ENCODE measurements at regions of chr6 and their contacts with region 1.

Region 1: GRCh38 chr6:122869437-122870024 is 80.5 kb downstream of the SMPDL3A start:
- DNase-seq: peak; percentile 25 to 38 (median 29)
- ATAC-seq: peak; percentile 81
- H3K4me3 ChIP-seq: no peak overlapping the region
- H3K27ac ChIP-seq: no peak overlapping the region
- H3K4me1 ChIP-seq: no peaks in the 10 kb centered on the region
- H3K27me3 ChIP-seq: no peaks in the 10 kb centered on the region
- CTCF ChIP-seq: peak; percentile 53 to 57 (median 54)
- EP300 ChIP-seq: no peak
- POLR2A ChIP-seq: no peak
- RAD21 ChIP-seq: peak; percentile 58 to 76

Region 2: GRCh38 chr6:122995921-122996793 is 126.6 kb after region 1 on chr6 and contains the start of gene CLVS2:
- CTCF ChIA-PET with region 1: no interaction called
- POLR2A ChIA-PET with region 1: no interaction called
- in situ Hi-C with region 1: no loop called
- intact Hi-C with region 1: loop called (anchors 10 kb)
- DNase-seq: peak in 1 of 4 experiments; percentile 4
- ATAC-seq: peak; percentile 72
- H3K4me3 ChIP-seq: no peak within 1 kb of the TSS
- H3K27ac ChIP-seq: no peak within 1 kb of the TSS
- H3K4me1 ChIP-seq: peaks cover 0 to 9% of the 10 kb centered on the region in 2 experiments; a peak in 2 of 5 replicates
- H3K27me3 ChIP-seq: no peaks in the 10 kb centered on the region
- CTCF ChIP-seq: no peak
- EP300 ChIP-seq: no peak
- POLR2A ChIP-seq: no peak
- RAD21 ChIP-seq: no peak
- polyA plus RNA-seq, gene CLVS2: 0.01 TPM in 1 of 2 experiments, not detected in the other

Region 3: GRCh38 chr6:123316733-123317323 is 447.3 kb after region 1 on chr6:
- CTCF ChIA-PET with region 1: interaction called, 4 read pairs
- POLR2A ChIA-PET with region 1: no interaction called
- in situ Hi-C with region 1: no loop called
- intact Hi-C with region 1: loop called (anchors 2 kb)
- DNase-seq: peak; percentile 9 to 22 (median 19)
- ATAC-seq: no peak
- H3K4me3 ChIP-seq: no peak overlapping the region
- H3K27ac ChIP-seq: no peak overlapping the region
- H3K4me1 ChIP-seq: no peaks in the 10 kb centered on the region
- H3K27me3 ChIP-seq: no peaks in the 10 kb centered on the region
- CTCF ChIP-seq: peak in 2 of 3 experiments; percentile 21 to 52; a peak in 3 of 6 replicates
- EP300 ChIP-seq: no peak
- POLR2A ChIP-seq: no peak
- RAD21 ChIP-seq: peak; percentile 42 to 57

Region 4: DNA sequence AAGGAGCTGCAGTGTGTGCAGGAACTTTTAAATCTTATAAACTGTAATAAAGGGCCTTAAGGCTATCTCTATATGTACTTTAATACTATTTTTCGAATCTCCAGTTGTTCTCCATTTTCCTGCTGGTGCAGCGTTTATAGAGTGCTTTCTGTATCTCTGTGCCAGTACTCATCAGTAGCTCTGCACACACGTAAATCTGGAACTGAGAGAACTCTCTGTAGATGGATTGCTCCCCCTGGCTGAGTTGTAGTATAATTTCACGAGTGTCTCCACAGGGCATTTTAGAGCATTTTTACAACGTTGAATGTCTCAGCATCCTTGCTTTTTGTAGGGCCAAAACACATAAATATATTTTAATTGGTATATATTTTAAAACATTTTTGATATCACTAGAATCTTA is 510.7 kb after region 1 on chr6:
- CTCF ChIA-PET with region 1: no interaction called
- POLR2A ChIA-PET with region 1: interaction called, 3 read pairs
- in situ Hi-C with region 1: no loop called
- intact Hi-C with region 1: loop called (anchors 1 kb)
- DNase-seq: peak in 3 of 4 experiments; percentile 7 to 60 (median 9)
- ATAC-seq: peak; percentile 97
- H3K4me3 ChIP-seq: no peak overlapping the region
- H3K27ac ChIP-seq: no peak overlapping the region
- H3K4me1 ChIP-seq: no peaks in the 10 kb centered on the region
- H3K27me3 ChIP-seq: no peaks in the 10 kb centered on the region
- CTCF ChIP-seq: peak in 2 of 3 experiments; percentile 44; a peak in 3 of 6 replicates
- EP300 ChIP-seq: no peak
- POLR2A ChIP-seq: no peak
- RAD21 ChIP-seq: peak; percentile 36 to 82; a peak in 2 of 4 replicates

Region 5: GRCh38 chr6:123715006-123715875 is 845.7 kb after region 1 on chr6:
- CTCF ChIA-PET with region 1: no interaction called
- POLR2A ChIA-PET with region 1: no interaction called
- in situ Hi-C with region 1: no loop called
- intact Hi-C with region 1: loop called (anchors 5 kb)
- DNase-seq: peak in 3 of 4 experiments; percentile 7 to 31 (median 8)
- ATAC-seq: peak; percentile 53; the same call in 2 of the 3 replicates
- H3K4me3 ChIP-seq: no peak overlapping the region
- H3K27ac ChIP-seq: no peak overlapping the region
- H3K4me1 ChIP-seq: no peaks in the 10 kb centered on the region; a peak in 1 of 5 replicates
- H3K27me3 ChIP-seq: no peaks in the 10 kb centered on the region
- CTCF ChIP-seq: peak; percentile 35 to 52 (median 35); a peak in 3 of 6 replicates
- EP300 ChIP-seq: no peak
- POLR2A ChIP-seq: no peak
- RAD21 ChIP-seq: peak; percentile 75 to 83

Measured in K562 (cell line).